ENCODE measurements at regions of chr3 and their contacts with region 1.

Region 1: DNA sequence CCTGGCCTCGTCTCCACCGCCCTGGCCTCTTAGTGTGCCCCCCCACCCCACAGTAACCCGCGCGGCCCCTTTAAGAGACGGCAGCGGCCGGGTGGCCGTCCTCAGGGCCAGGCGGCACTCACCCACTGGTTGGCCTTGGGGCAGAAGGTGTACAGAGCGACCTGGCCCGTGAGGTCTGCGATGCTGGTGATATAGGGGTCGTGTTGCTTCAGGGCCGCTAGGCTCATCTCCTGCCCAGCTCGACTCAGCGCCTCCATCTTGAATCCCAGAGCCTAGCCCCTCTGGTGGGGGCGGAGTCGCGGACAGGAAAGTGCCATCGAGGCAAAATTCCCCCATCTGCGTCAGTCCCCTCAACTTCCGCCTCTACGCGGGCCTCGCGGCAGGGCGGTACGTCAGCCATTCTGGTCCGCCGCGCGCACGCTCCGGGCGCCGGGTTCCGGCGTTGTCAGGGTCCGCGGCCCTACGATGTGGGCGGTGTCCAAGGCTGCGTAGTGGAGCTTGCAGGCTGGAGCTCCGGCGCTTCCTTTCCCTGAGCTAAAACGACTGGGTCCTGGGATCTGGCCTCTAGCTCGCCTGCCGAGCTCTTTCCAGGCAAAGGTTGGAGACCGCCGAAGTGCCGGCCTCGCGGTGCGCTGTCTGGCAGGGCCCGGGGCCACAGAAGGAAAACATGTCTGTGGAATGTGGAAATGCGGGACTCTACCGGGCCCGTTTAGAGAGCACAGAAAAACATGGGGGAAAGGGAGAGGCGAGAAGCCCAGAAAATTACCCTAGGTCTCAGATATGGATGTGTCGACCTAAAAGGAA is at the start of gene DCP1A:
- DNase-seq: peak; percentile 97
- ATAC-seq: peak; percentile 94
- H3K4me3 Mint-ChIP-seq: peak within 1 kb of the TSS; percentile 98
- H3K27ac Mint-ChIP-seq: peak within 1 kb of the TSS; percentile 100
- H3K4me1 Mint-ChIP-seq: peaks cover 15% of the 10 kb centered on the region
- H3K27me3 Mint-ChIP-seq: no peaks in the 10 kb centered on the region
- CTCF ChIP-seq: no peak
- total RNA-seq, gene DCP1A: 16.4 to 19.1 TPM (median 17.4 TPM) in 3 replicates

Region 2: GRCh38 chr3:53255775-53256703 is 91.4 kb before region 1 on chr3 and contains the start of gene TKT:
- CTCF ChIA-PET with region 1: interaction called, 4 read pairs
- POLR2A ChIA-PET with region 1: interaction called, 10 read pairs
- DNase-seq: peak; percentile 77
- ATAC-seq: peak; percentile 67
- H3K4me3 Mint-ChIP-seq: peak within 1 kb of the TSS; percentile 85
- H3K27ac Mint-ChIP-seq: peak within 1 kb of the TSS; percentile 92
- H3K4me1 Mint-ChIP-seq: peaks cover 62% of the 10 kb centered on the region
- H3K27me3 Mint-ChIP-seq: peaks cover 9% of the 10 kb centered on the region; the same call in 1 of the 2 replicates
- CTCF ChIP-seq: no peak
- total RNA-seq, gene TKT: 1,040 to 1,222 TPM (median 1,204 TPM) in 3 replicates

Region 3: GRCh38 chr3:53303957-53304356 is 43.5 kb before region 1 on chr3:
- CTCF ChIA-PET with region 1: interaction called, 3 read pairs
- POLR2A ChIA-PET with region 1: interaction called, 10 read pairs
- DNase-seq: no peak
- ATAC-seq: no peak
- H3K4me3 Mint-ChIP-seq: no peak overlapping the region
- H3K27ac Mint-ChIP-seq: no peak overlapping the region
- H3K4me1 Mint-ChIP-seq: no peaks in the 10 kb centered on the region
- H3K27me3 Mint-ChIP-seq: no peaks in the 10 kb centered on the region
- CTCF ChIP-seq: no peak

Region 4: DNA sequence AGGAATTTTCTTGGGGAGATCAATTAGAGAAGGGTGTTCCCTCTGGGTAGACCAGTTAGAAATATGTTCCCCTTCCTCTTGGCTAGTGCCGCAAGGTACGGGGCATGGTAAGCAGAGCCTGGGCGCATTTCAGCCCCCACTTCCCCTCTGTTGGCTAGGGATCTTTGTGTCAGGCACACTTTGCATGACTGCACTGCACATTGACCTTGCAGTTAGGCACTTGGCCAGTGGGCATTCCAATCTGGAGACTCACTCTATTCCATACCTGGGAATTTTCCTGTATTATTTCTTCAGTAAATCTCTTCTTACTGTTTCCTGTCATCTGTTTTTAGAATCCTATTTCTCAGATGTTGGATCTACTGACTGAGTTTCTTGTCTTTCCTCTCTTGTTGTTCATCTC is 117.0 kb after region 1 on chr3:
- CTCF ChIA-PET with region 1: no interaction called
- POLR2A ChIA-PET with region 1: no interaction called
- DNase-seq: no peak
- ATAC-seq: no peak
- H3K4me3 Mint-ChIP-seq: no peak overlapping the region
- H3K27ac Mint-ChIP-seq: no peak overlapping the region
- H3K4me1 Mint-ChIP-seq: no peaks in the 10 kb centered on the region
- H3K27me3 Mint-ChIP-seq: peaks cover 8% of the 10 kb centered on the region; the same call in 1 of the 2 replicates
- CTCF ChIP-seq: no peak

Region 5: DNA sequence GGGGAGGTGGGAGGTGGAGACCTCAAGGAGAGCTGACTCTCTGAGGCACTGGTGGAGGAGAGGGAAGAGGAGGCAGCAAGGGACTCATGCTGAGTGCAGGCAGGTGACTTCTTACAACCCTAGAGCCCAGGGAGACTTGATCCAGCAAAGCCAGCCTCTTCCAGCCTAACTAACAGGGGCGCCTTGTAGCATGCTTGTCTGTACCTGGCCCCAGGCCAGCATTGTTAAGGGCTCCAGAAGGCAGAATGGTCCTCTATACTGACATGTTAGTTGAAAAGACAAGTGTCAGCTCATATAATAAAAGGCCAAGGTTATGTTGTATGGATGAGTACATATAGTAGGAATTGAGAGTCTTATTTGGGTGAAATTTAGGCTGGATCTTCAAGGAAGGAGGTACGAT is 433.3 kb after region 1 on chr3:
- CTCF ChIA-PET with region 1: no interaction called
- POLR2A ChIA-PET with region 1: interaction called, 10 read pairs
- DNase-seq: no peak
- ATAC-seq: no peak
- H3K4me3 Mint-ChIP-seq: no peak overlapping the region
- H3K27ac Mint-ChIP-seq: no peak overlapping the region
- H3K4me1 Mint-ChIP-seq: no peaks in the 10 kb centered on the region
- H3K27me3 Mint-ChIP-seq: no peaks in the 10 kb centered on the region
- CTCF ChIP-seq: no peak

Measured in WTC11 (cell line).